ENCODE measurements at regions of chr2 and their contacts with region 1.

Region 1: DNA sequence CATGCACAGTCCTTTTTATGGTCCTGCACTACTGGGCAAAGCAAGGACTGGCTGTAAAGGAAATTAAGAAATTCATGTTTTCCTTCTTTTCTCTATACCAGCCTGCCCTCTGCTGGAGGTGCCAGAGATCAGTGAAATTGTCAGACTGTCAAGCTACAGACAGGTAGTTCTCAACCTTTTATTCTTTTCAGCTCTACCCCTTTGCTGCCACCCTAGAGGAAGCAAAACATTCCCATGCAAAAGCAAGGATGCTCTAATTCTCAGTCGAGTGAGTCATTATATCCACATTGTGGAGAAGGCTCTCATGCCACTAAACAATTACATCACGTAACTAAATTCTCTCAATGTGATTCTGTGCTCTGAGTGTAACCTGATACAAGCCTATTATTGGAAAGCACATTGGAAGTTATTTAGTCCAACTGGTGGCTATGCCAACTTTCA is 25.0 kb upstream of the RAPGEF4 start:
- DNase-seq: no peak
- ATAC-seq: peak; percentile 53

Region 2: GRCh38 chr2:172588931-172589330 is 121.7 kb before region 1 on chr2:
- intact Hi-C with region 1: loop called (anchors 5 kb)
- DNase-seq: no peak
- ATAC-seq: no peak

Measured in Right ventricle myocardium inferior (tissue), 1 donor.